ENCODE measurements at regions of chr7 and their contacts with region 1.

Region 1: DNA sequence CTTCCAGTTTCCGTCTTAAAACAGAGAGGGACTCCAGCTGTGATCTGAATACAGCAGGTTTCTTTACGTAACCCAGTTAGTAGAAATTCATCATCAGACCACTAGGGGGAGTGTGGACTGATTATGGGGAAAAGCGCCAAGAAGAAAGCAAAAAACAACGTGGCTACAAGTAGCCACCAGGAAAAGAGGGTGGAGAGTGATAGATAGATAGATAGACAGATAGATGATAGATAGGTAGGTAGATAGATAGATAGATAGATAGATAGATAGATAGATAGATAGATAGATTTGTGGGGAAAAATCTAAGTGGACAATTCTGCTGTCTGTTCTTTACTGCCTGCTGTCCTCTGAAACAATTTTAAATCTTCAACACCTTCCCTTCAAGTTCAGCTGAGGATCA is 12.7 kb upstream of the AKR1B10 start:
- DNase-seq: no peak
- ATAC-seq: peak; percentile 75

Region 2: GRCh38 chr7:134432296-134433152 is 82.1 kb before region 1 on chr7:
- intact Hi-C with region 1: loop called in 1 of 2 experiments (anchors 5 kb)
- DNase-seq: peak; percentile 88 to 92
- ATAC-seq: peak; percentile 82

Region 3: DNA sequence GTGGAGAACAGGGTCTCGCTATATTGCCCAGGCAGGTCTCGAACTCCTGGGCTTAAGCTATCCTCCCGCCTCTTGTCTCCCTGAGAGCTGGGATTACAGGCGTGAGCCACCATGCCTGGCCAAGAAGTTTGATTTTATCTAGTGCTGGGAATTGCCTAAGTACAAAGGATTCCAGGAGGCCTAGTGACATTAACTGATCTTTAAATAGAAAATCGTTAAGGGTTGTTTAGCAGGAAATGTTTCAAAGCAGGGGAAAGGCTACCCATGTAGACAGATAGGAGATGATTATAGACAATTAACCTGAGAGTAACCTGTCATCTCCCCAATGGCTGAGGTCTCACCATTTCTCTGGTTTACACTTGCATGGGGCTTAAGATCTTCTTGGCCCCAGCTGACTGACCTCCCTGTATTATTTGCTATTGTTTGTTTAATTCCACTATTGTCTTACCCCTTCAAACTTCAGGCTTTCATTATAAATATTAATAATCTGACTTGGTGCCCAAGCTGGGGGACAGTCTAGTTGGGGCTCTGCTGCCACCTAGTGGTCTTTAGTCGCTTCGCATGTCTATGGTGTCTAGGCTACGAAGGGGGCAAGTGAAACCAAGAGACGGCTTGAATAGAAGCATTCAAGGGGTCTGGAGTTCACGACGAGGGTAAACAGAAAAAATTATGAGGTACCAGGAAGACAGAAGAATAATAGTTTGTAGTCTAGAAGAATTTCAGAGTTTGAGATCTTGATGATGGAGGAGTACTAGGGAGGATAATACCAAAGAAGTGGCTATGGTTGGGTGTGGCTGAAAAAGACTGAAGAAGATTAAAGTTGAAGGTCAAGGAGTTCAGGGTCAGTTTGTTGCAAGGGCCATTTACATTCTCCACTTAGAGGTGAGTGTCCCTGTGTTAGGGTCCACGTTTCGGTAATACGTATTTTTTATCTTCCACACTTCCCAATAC is 91.6 kb after region 1 on chr7:
- intact Hi-C with region 1: loop called in 1 of 2 experiments (anchors 10 kb)
- DNase-seq: peak; percentile 44 to 70
- ATAC-seq: peak; percentile 79

Measured in left colon (tissue), 2 donors.